ENCODE measurements at regions of chr19 and their contacts with region 1.

Region 1: DNA sequence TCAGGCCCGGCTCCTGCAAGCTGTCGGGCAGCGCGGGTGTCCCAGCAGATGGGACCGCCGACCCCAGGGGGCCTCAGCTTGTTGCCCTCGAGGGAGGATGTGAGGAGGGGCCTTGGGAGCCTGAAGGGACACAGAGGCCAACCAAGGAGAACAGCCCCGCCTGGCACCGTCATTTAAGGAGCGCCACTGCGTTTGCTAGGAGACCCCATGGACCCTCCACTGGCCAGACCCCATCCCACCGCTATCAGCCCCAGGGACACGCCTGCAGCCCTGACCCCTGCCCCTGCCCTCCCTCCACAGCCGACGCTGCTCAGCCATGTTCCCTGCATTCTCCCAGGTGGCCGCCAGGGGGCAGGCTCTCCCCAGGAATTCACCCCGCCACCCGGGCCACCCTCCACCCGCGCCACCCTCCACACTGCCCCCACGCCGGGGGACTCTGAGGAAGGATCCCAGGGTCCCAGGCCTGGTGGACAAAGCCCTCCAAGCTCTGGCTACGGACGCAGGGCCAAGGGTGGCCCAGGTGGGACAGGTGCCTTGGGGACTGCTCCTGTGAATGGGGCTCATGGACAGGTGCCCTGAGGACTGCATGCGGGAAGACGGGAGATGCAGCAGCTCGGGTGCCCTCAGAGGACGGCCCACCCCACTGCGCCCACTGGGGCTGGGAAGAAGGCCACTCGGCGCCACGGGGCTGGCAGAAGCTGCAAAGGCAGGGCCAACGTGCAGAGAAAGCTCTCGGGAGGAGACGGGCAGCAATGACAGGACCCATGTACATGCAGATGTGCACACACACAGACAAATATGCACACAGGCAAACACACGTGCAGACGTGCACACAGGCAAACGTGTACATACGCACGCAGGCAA is 34.4 kb downstream of the PIP5K1C start:
- DNase-seq: peak; percentile 84
- ATAC-seq: peak; percentile 83
- H3K4me3 ChIP-seq: no peak overlapping the region
- H3K27ac ChIP-seq: no peak overlapping the region
- H3K4me1 ChIP-seq: peaks cover 14% of the 10 kb centered on the region
- H3K27me3 ChIP-seq: no peaks in the 10 kb centered on the region
- CTCF ChIP-seq: peak; percentile 93

Region 2: GRCh38 chr19:3708208-3708931 is 42.5 kb after region 1 on chr19 and contains the start of gene TJP3:
- intact Hi-C with region 1: loop called (anchors 5 kb)
- DNase-seq: peak; percentile 92
- ATAC-seq: peak; percentile 81
- H3K4me3 ChIP-seq: peak within 1 kb of the TSS; percentile 48
- H3K27ac ChIP-seq: peak within 1 kb of the TSS; percentile 66
- H3K4me1 ChIP-seq: peaks cover 9% of the 10 kb centered on the region
- H3K27me3 ChIP-seq: peaks cover 10% of the 10 kb centered on the region
- CTCF ChIP-seq: no peak
- total RNA-seq, gene TJP3: 23.0 TPM